Activated naive CD4-positive, alpha-beta T cell treated with anti-CD3 and anti-CD28 coated beads for 36 hours (primary cell): ENCODE measurements at regions of chr22 and their contacts with region 1.

Region 1: GRCh38 chr22:43088979-43089717 is at the start of gene TTLL1:
- DNase-seq: peak; percentile 93
- H3K4me3 Mint-ChIP-seq: peak within 1 kb of the TSS; percentile 88
- H3K27ac Mint-ChIP-seq: peak within 1 kb of the TSS; percentile 86
- H3K4me1 Mint-ChIP-seq: peaks cover 14% of the 10 kb centered on the region
- H3K27me3 Mint-ChIP-seq: no peaks in the 10 kb centered on the region
- total RNA-seq, gene TTLL1: 7.4 TPM

Region 2: GRCh38 chr22:42614312-42615091 is 474.6 kb before region 1 on chr22 and contains the start of gene POLDIP3:
- CTCF ChIA-PET with region 1: no interaction called
- intact Hi-C with region 1: loop called (anchors 1 kb)
- DNase-seq: peak; percentile 99
- H3K4me3 Mint-ChIP-seq: peak within 1 kb of the TSS; percentile 91
- H3K27ac Mint-ChIP-seq: peak within 1 kb of the TSS; percentile 100
- H3K4me1 Mint-ChIP-seq: peaks cover 50% of the 10 kb centered on the region
- H3K27me3 Mint-ChIP-seq: no peaks in the 10 kb centered on the region
- total RNA-seq, gene POLDIP3: 83.7 to 93.8 TPM

Region 3: GRCh38 chr22:42662114-42663021 is 426.8 kb before region 1 on chr22:
- CTCF ChIA-PET with region 1: no interaction called
- intact Hi-C with region 1: loop called (anchors 5 kb)
- DNase-seq: peak; percentile 86
- H3K4me3 Mint-ChIP-seq: peak overlapping the region; percentile 62
- H3K27ac Mint-ChIP-seq: no peak overlapping the region
- H3K4me1 Mint-ChIP-seq: peaks cover 2% of the 10 kb centered on the region
- H3K27me3 Mint-ChIP-seq: no peaks in the 10 kb centered on the region

Region 4: GRCh38 chr22:42780070-42780540 is 309.0 kb before region 1 on chr22:
- CTCF ChIA-PET with region 1: no interaction called
- intact Hi-C with region 1: loop called (anchors 1 kb)
- DNase-seq: peak; percentile 64
- H3K4me3 Mint-ChIP-seq: no peak overlapping the region
- H3K27ac Mint-ChIP-seq: no peak overlapping the region
- H3K4me1 Mint-ChIP-seq: no peaks in the 10 kb centered on the region
- H3K27me3 Mint-ChIP-seq: no peaks in the 10 kb centered on the region

Region 5: GRCh38 chr22:42895087-42895486 is 194.1 kb before region 1 on chr22:
- CTCF ChIA-PET with region 1: no interaction called
- intact Hi-C with region 1: loop called (anchors 10 kb)
- DNase-seq: peak; percentile 57
- H3K4me3 Mint-ChIP-seq: peak overlapping the region; percentile 35
- H3K27ac Mint-ChIP-seq: peak overlapping the region; percentile 74
- H3K4me1 Mint-ChIP-seq: peaks cover 38% of the 10 kb centered on the region
- H3K27me3 Mint-ChIP-seq: no peaks in the 10 kb centered on the region

Region 6: GRCh38 chr22:43014869-43015676 is 74.1 kb before region 1 on chr22 and contains the start of gene PACSIN2:
- CTCF ChIA-PET with region 1: no interaction called
- intact Hi-C with region 1: loop called (anchors 2 kb)
- DNase-seq: peak; percentile 100
- H3K4me3 Mint-ChIP-seq: peak within 1 kb of the TSS; percentile 94
- H3K27ac Mint-ChIP-seq: peak within 1 kb of the TSS; percentile 71
- H3K4me1 Mint-ChIP-seq: peaks cover 21% of the 10 kb centered on the region
- H3K27me3 Mint-ChIP-seq: no peaks in the 10 kb centered on the region
- total RNA-seq, gene PACSIN2: 31.2 to 32.9 TPM

Region 7: DNA sequence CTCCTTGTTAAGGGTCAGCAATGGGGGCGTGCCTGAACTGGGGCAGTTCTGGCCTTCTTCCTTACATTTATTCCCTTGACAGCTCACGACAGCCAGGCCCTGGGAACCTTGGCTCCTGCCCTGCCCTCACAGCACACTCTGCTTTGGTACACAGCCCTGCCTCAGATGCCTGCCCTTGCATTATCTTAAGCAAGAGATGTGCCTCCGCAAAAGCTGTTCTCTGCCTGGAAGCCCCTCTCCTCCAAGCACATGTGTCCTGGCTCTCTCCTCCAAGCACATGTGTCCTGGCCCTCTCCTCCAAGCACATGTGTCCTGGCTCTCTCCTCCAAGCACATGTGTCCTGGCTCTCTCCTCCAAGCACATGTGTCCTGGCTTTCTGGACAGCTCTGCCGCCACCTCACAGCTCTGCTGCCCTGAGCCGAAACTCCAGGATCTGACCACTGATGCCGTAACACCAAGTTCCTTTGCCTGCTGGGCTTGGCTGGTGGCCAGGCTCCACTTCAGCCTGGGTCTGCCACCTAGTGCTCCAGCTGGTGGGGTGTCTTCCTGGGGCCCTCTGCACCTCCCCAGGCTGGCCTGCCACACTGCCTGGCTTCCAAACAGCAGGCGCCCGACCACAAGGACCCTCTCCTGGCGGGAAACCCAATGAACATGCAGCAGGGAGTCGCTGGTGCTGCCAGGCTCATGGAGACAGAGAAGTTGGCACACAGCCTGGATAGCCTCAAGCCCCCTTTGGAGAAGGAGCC is 201.0 kb after region 1 on chr22:
- CTCF ChIA-PET with region 1: no interaction called
- intact Hi-C with region 1: no loop called
- DNase-seq: no peak
- H3K4me3 Mint-ChIP-seq: no peak overlapping the region
- H3K27ac Mint-ChIP-seq: no peak overlapping the region
- H3K4me1 Mint-ChIP-seq: peaks cover 2% of the 10 kb centered on the region
- H3K27me3 Mint-ChIP-seq: no peaks in the 10 kb centered on the region